ENCODE measurements at regions of chr1 and their contacts with region 1.

Region 1: DNA sequence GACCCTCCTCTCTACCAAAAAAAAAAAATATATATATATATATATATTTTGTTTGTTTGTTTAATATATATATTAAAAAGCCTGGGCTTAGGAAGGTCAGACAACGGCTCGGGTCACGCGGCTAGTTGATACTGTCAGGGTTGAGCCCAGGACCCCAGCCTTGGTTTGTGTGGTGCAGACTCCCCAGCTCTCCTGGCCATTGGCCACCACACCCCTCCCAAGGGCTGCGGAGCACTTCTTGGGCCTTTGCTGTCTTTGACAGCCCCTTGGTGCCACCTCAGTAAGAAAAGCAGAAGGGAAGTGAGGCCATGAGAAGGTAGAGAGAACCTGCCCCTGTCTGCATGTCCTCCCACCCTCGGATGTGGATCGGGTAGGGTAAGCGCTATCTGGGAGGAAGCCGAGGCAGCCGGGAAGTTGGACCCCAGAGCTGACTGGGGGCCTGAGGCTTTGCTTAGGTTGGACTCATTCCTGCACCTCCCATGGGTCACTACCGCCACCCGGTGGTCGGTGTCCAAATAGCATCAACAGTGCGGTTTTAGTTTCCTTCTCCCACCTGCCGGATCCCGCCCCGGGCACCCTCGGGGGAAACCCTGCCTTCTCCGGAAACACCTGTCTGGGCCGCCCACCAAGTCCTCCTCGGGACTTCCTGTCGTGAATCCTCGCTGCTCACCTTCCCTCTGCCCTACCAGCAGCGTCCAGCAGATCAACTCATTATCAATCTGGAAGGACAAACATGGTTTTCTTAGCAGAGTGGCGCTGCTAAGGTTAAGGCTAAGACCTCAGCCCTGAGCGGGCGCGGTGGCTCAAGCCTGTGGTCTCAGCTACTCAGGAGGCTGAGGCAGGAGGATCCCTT is 29.8 kb upstream of the GNPAT start:
- DNase-seq: peak; percentile 92

Region 2: GRCh38 chr1:230136453-230137336 is 1074.5 kb before region 1 on chr1:
- intact Hi-C with region 1: loop called in 1 of 2 experiments (anchors 5 kb)
- DNase-seq: no peak

Region 3: GRCh38 chr1:230797942-230798418 is 413.3 kb before region 1 on chr1:
- intact Hi-C with region 1: loop called in 1 of 2 experiments (anchors 10 kb)
- DNase-seq: no peak

Region 4: GRCh38 chr1:230937371-230937770 is 273.9 kb before region 1 on chr1:
- intact Hi-C with region 1: loop called in 1 of 2 experiments (anchors 10 kb)
- DNase-seq: no peak

Region 5: DNA sequence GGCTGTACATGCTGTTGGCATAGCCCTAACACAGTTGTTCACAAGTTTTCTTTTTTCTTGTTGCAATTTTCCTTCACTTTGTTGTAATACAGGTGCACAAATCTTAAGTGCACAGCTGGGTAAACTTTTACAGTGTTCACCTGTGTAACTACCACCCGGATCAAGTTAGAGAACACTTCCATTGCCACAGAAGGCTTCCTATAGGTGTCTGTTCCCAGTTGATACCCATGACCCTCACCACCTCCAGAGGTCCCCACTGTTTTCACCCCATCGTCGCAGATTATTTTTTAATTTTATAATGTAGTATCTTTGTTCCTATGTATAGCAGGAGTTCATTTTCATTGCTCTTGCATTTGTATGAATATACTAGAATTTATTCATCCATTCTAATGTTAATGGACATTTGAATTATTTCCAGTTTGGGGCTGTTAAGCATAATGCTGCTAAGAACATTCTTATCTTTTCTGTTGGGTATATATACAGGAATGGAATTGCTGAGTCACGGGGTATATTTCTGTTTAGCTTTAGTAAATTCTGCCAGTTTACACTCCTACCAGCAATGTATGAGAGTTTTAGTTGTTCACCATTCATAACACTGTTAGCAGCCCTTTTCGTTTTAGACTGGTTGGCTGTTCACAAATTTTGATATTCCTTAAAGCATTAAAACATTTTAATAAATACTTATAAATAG is 143.2 kb after region 1 on chr1:
- intact Hi-C with region 1: no loop called
- DNase-seq: no peak